ENCODE measurements at regions of chr1 and their contacts with region 1.

Region 1: DNA sequence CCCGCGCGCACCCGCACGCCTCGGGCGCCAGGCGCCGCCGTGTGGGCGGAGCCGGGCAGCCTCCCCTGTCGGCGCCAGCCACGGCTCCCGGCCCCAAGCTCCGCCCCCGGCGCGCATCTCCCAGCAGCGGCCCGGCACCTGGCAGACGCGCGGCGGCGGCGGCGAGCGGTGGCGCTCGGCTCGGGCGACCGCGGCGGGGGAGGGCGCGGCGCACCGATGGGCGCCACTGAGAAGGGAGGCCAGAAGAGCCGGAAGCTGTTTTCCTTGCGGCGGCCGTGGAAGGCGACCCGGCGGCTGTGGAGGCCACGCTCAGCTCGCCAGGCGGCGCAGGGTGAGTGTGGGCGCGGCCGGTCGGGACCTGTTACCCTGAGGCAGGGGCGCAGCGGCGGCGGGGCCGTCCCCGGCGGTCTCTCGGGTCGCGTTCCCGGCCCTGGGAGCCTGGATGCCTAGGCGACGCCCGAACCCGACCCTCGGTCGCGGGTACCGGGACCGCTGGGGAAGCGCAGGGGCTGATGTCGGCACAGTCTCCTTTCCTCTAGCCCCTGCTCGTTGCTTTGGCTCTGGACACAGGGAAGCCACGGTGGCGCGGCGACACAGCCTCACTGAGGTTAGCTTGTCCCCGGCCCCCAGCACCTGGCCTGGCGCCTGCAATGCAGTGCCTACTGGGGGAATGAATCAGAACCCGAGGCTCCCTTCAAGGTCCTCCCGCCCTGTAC is 54.9 kb upstream of the DNAJC6 start:
- DNase-seq: peak; percentile 88
- H3K4me3 Mint-ChIP-seq: peak overlapping the region; percentile 86
- H3K27ac Mint-ChIP-seq: no peak overlapping the region
- H3K4me1 Mint-ChIP-seq: peaks cover 16% of the 10 kb centered on the region
- H3K27me3 Mint-ChIP-seq: peaks cover 4% of the 10 kb centered on the region

Region 2: DNA sequence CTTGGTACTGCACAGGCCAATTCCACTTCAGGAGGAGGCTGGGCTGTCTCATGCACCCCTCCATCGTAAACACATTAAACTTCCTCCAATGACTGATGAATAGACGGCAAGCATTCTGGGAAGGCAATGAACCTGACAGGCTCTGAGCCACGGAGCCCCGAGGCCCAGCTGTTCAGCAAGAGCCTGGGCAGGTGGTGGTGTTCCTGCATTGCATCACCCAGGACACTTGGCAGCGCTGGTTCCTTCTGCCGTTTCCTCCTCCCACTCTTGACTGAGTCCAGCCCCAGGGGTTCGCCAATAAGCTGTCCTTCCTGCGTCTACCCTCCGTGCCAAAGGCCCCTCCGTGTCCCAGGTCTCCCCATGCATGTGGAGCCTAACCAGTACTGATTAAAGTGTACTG is 397.9 kb before region 1 on chr1:
- CTCF ChIA-PET with region 1: no interaction called
- intact Hi-C with region 1: no loop called
- DNase-seq: no peak
- H3K4me3 Mint-ChIP-seq: no peak overlapping the region
- H3K27ac Mint-ChIP-seq: peak overlapping the region; percentile 67
- H3K4me1 Mint-ChIP-seq: peaks cover 6% of the 10 kb centered on the region
- H3K27me3 Mint-ChIP-seq: no peaks in the 10 kb centered on the region

Region 3: DNA sequence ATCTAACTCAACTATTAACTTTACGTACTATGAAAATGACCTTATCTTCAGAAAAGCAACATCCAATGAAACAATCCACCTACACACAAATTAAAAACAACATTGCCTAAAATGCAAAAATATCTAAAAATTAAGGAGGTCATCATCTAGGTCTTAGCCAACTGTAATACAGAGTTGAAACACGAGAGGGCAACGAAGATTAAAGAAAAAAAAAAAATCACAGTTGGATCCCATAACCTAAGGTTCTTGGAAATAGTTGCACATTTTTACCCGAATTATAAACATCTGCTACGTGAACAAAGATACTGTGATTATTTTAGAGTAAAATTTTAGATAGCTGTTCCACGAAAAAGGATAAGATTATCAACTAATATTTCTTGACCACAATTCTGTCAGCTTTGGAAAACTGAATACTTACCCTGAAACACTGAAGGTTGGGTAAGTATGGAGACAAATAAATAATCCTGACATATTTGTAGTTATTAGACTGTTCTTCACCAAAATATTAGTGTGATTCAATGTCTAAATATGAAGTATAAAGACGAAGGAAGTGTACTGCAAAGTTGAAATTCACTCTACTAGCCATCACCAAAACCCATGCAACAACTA is 194.4 kb before region 1 on chr1:
- CTCF ChIA-PET with region 1: no interaction called
- intact Hi-C with region 1: loop called (anchors 5 kb)
- DNase-seq: no peak
- H3K4me3 Mint-ChIP-seq: no peak overlapping the region
- H3K27ac Mint-ChIP-seq: no peak overlapping the region
- H3K4me1 Mint-ChIP-seq: peaks cover 61% of the 10 kb centered on the region
- H3K27me3 Mint-ChIP-seq: no peaks in the 10 kb centered on the region

Region 4: DNA sequence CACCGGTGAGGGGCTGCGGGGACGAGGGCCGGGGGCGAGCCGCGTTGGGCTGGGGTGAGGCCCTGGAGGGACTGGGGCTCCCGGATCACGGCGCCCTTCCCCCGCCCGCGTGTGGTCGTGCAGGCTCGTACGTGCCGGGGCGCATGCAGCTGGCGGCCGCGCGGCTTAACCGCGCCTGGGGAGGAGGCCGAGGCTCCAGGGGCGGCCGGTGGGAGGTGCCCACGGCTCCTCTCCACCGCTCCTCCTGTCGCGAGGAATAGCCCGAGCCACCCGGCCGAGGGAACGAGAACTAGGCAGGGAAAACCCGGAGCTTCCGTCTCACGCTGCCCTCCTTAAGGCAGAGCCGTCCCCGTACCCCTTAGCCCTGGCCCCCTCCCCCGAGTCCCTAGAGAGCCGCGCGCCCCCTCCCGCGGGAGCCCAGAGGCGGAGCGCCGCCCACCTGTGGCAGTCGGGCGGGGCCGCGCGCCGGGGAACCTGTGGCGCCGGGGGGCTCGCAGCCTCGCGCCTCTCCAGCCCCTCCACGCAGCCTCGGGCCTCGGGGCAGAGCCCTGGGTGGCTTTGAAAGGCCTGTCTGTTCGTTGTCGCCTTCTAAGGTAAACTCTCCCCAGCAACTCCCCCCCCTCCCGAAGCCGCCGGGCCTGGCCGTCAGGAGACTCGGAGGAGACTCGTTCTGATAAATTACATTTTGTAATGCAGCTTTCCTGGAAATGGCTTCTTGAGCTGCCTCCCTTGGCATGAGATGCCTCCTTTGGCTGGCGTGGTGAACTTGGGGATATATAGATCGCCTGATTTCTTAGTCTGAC is 105.7 kb before region 1 on chr1:
- CTCF ChIA-PET with region 1: no interaction called
- intact Hi-C with region 1: loop called (anchors 2 kb)
- DNase-seq: peak; percentile 41
- H3K4me3 Mint-ChIP-seq: peak overlapping the region; percentile 80
- H3K27ac Mint-ChIP-seq: no peak overlapping the region
- H3K4me1 Mint-ChIP-seq: peaks cover 10% of the 10 kb centered on the region
- H3K27me3 Mint-ChIP-seq: peaks cover 47% of the 10 kb centered on the region

Region 5: GRCh38 chr1:65165269-65165993 is 89.0 kb before region 1 on chr1:
- CTCF ChIA-PET with region 1: no interaction called
- intact Hi-C with region 1: no loop called
- DNase-seq: no peak
- H3K4me3 Mint-ChIP-seq: no peak overlapping the region
- H3K27ac Mint-ChIP-seq: no peak overlapping the region
- H3K4me1 Mint-ChIP-seq: peaks cover 6% of the 10 kb centered on the region
- H3K27me3 Mint-ChIP-seq: peaks cover 8% of the 10 kb centered on the region

Region 6: DNA sequence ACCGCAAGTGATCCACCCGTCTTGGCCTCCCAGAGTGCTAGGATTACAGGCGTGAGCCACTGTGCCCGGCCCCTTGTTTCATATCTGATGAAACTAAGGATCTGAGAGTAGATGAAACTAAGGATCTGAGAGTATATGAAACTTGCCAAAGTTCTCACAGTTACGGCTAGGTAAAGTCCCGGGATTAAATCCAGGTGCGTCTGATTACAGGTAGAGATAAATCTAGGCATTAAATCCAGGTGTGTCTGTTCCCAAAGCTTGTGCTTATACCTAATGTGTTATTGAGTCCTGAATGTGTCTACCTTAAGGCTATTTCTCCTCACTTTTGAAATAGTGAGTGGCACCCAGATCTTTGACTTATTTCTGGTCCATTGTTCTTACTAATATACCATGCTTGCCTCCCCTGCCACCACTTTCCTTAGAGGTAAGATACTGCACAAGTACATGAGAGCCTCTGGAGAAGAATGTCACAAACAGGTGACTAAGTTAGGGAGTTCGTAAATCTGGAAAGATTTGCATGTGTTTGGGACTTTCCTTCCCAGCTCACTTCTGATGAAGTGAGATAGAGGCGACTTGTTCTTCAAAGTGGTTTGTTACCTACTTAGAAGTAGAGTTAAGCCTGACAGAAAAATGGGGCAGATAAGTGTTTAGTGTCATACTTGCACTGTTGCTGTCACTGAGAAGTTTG is 40.0 kb before region 1 on chr1:
- CTCF ChIA-PET with region 1: interaction called, 3 read pairs
- intact Hi-C with region 1: loop called (anchors 1 kb)
- DNase-seq: no peak
- H3K4me3 Mint-ChIP-seq: no peak overlapping the region
- H3K27ac Mint-ChIP-seq: no peak overlapping the region
- H3K4me1 Mint-ChIP-seq: peaks cover 41% of the 10 kb centered on the region
- H3K27me3 Mint-ChIP-seq: no peaks in the 10 kb centered on the region

Region 7: DNA sequence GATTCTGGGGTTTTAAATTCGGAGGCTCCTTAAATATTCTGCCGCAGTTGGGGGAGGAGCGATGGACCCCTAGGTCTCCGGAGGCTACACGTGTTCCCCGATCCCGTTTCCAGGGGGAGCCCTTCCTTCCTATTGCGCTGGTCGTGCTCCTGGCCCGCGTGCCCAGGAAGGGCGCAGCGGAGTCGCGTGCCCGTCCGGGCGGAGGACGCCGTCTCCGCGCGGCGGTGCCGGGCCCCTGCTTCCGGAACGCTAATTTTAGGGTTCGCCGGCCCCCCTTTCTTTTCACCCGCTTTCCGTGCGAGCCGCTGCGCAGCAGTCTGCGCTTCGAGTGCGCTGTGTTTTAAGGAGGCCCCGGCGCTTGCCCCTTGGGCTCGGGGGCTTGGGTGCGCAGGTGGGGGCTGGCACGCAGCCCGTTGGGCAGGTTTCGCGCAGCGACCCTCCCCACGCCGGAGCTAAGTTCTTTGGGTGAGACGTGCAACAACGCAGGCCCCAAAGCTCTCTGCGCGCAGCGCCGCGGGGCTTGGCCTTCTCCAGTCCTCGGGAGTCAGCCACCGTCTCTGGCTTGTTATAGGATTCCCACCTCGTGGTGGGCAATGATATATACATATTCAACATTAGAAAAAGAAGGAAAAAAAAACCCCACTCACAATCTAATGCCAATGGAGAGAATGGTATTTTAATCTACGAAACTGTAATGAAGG is 11.3 kb after region 1 on chr1:
- CTCF ChIA-PET with region 1: no interaction called
- intact Hi-C with region 1: loop called (anchors 1 kb)
- DNase-seq: peak; percentile 35
- H3K4me3 Mint-ChIP-seq: peak overlapping the region; percentile 35
- H3K27ac Mint-ChIP-seq: no peak overlapping the region
- H3K4me1 Mint-ChIP-seq: peaks cover 27% of the 10 kb centered on the region
- H3K27me3 Mint-ChIP-seq: peaks cover 16% of the 10 kb centered on the region

Region 8: DNA sequence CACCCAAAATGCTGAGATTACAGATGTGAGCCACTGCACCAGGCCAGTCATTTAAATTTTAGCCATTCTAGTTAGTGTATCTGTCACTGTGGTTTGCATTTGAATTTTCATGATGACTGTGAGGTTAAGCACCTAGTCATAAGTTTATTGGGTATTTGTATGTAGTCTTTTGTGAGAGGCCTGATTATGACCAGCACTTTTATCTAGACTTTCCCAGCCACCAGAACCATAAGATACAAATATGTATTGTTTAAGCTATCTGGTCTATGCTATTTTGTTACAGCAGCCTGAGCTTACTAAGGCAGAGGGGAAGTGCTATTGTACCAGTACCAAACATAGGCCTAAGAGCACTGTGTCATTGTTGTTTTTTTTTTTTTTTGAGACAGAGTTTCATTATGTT is 35.0 kb after region 1 on chr1:
- CTCF ChIA-PET with region 1: no interaction called
- intact Hi-C with region 1: no loop called
- DNase-seq: no peak
- H3K4me3 Mint-ChIP-seq: no peak overlapping the region
- H3K27ac Mint-ChIP-seq: no peak overlapping the region
- H3K4me1 Mint-ChIP-seq: no peaks in the 10 kb centered on the region
- H3K27me3 Mint-ChIP-seq: peaks cover 3% of the 10 kb centered on the region

Region 9: GRCh38 chr1:65459397-65459768 is 204.9 kb after region 1 on chr1:
- CTCF ChIA-PET with region 1: interaction called, 10 read pairs
- intact Hi-C with region 1: no loop called
- DNase-seq: peak; percentile 12
- H3K4me3 Mint-ChIP-seq: no peak overlapping the region
- H3K27ac Mint-ChIP-seq: no peak overlapping the region
- H3K4me1 Mint-ChIP-seq: peaks cover 18% of the 10 kb centered on the region
- H3K27me3 Mint-ChIP-seq: no peaks in the 10 kb centered on the region